Body of pancreas (tissue), 4 donors: ENCODE measurements at regions of chr14 and their contacts with region 1.

Region 1: GRCh38 chr14:23640524-23641141 is 4.5 kb downstream of the DHRS2 start:
- DNase-seq: peak in 2 of 4 donors; percentile 27 to 37
- ATAC-seq: peak; percentile 45
- H3K4me3 ChIP-seq: no peak overlapping the region
- H3K27ac ChIP-seq: no peak overlapping the region
- H3K4me1 ChIP-seq: peaks cover 5% of the 10 kb centered on the region
- H3K27me3 ChIP-seq: no peaks in the 10 kb centered on the region
- CTCF ChIP-seq: no peak
- POLR2A ChIP-seq: no peak

Region 2: GRCh38 chr14:23602181-23603095 is 38.2 kb before region 1 on chr14:
- intact Hi-C with region 1: no loop called
- DNase-seq: peak in 2 of 4 donors; percentile 35 to 44
- ATAC-seq: peak; percentile 74
- H3K4me3 ChIP-seq: no peak overlapping the region
- H3K27ac ChIP-seq: peak overlapping the region in 1 of 4 donors; percentile 36
- H3K4me1 ChIP-seq: peaks cover 48% of the 10 kb centered on the region
- H3K27me3 ChIP-seq: no peaks in the 10 kb centered on the region
- CTCF ChIP-seq: no peak
- POLR2A ChIP-seq: no peak

Region 3: DNA sequence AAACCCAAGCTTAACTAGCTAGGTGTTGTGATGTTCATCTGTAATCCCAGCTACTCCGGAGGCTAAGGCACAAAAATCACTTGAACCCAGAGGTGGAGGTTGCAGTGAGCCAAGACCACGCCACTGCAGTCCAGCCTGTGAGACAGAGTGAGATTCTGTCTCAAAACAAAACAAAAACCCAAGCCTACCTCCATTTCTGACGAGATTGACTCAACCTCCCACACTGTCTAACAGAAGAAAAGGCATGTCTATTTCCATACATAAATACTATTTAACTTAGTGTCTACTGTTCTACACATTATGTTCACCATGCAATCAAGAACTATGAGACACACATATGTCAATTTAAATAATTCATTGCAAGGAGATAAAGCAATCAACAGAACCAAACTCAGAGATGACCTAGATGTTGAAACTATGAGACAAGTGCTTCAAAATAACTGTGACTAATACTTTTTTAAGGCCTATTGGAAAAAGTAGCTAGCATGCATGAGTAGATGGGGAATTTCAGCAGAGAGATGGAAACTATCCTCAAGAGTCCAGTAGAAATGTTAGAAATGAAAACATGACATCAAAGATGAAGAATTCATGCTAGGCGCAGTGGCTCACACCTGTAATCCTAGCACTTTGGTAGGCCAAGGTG is 237.0 kb after region 1 on chr14:
- intact Hi-C with region 1: loop called (anchors 10 kb)
- DNase-seq: no peak
- ATAC-seq: no peak
- H3K4me3 ChIP-seq: no peak overlapping the region
- H3K27ac ChIP-seq: no peak overlapping the region
- H3K4me1 ChIP-seq: no peaks in the 10 kb centered on the region
- H3K27me3 ChIP-seq: no peaks in the 10 kb centered on the region
- CTCF ChIP-seq: no peak
- POLR2A ChIP-seq: no peak